A673 (cell line): ENCODE measurements at regions of chr18 and their contacts with region 1.

Region 1: DNA sequence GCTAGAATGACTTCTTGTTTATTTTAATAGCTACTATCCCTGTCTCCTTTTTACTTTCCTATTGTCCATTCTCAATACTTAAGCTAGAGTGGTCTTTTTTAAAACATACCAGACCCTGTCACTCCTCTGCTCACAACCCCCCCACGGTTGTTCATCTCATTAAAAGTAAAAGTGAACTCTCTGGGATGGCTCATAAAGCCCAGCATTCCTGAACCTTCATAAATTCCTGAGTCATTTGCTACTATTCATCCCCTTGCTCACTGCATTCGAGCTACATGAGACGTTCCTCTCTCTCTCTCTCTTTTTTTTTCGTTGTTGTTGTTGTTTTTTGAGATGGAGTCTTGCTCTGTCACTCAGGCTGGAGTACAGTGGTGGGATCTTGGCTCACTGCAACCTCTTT is 148.7 kb upstream of the DSEL start:
- DNase-seq: no peak
- H3K4me3 ChIP-seq: no peak overlapping the region
- H3K27ac ChIP-seq: peak overlapping the region; percentile 69
- H3K4me1 ChIP-seq: peaks cover 24% of the 10 kb centered on the region
- H3K27me3 ChIP-seq: no peaks in the 10 kb centered on the region
- CTCF ChIP-seq: no peak

Region 2: GRCh38 chr18:67194886-67195285 is 470.4 kb before region 1 on chr18:
- CTCF ChIA-PET with region 1: no interaction called
- POLR2A ChIA-PET with region 1: no interaction called
- intact Hi-C with region 1: no loop called
- DNase-seq: no peak
- H3K4me3 ChIP-seq: no peak overlapping the region
- H3K27ac ChIP-seq: no peak overlapping the region
- H3K4me1 ChIP-seq: no peaks in the 10 kb centered on the region
- H3K27me3 ChIP-seq: no peaks in the 10 kb centered on the region
- CTCF ChIP-seq: no peak

Region 3: DNA sequence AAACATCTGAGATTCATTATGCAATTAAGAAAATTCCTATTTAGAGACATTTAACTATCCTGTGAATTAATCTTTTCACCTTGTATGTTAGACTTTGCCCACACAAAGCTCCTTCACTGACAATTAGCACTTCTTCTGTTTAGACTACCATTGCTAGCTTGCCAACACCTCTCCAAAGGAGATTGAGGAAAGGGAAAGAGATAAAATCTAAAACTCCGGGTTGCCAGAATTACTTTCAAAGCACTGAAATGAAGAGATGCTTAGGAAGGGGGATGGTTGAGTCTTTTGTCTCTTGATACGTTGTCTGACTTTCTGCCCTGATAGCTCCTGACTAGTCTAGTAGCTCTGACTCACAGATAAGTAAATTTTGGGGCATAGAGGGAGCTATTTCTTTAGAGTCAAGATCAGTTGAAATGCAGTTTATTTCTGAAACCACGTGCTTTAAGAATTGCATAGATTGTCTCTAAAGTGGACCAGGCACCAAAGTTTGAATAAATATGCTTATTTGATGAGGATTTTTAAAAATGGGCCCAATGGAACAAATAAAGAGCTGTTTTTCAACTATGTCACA is 74.6 kb before region 1 on chr18:
- CTCF ChIA-PET with region 1: no interaction called
- POLR2A ChIA-PET with region 1: interaction called, 16 read pairs
- intact Hi-C with region 1: no loop called
- DNase-seq: peak; percentile 76
- H3K4me3 ChIP-seq: no peak overlapping the region
- H3K27ac ChIP-seq: no peak overlapping the region
- H3K4me1 ChIP-seq: peaks cover 7% of the 10 kb centered on the region
- H3K27me3 ChIP-seq: no peaks in the 10 kb centered on the region
- CTCF ChIP-seq: peak; percentile 45

Region 4: GRCh38 chr18:68623342-68623741 is 958.1 kb after region 1 on chr18:
- CTCF ChIA-PET with region 1: no interaction called
- POLR2A ChIA-PET with region 1: no interaction called
- intact Hi-C with region 1: loop called (anchors 10 kb)
- DNase-seq: peak; percentile 92
- H3K4me3 ChIP-seq: no peak overlapping the region
- H3K27ac ChIP-seq: peak overlapping the region; percentile 57
- H3K4me1 ChIP-seq: peaks cover 16% of the 10 kb centered on the region
- H3K27me3 ChIP-seq: no peaks in the 10 kb centered on the region
- CTCF ChIP-seq: peak; percentile 85